ENCODE measurements at regions of chr19 and their contacts with region 1.

Region 1: DNA sequence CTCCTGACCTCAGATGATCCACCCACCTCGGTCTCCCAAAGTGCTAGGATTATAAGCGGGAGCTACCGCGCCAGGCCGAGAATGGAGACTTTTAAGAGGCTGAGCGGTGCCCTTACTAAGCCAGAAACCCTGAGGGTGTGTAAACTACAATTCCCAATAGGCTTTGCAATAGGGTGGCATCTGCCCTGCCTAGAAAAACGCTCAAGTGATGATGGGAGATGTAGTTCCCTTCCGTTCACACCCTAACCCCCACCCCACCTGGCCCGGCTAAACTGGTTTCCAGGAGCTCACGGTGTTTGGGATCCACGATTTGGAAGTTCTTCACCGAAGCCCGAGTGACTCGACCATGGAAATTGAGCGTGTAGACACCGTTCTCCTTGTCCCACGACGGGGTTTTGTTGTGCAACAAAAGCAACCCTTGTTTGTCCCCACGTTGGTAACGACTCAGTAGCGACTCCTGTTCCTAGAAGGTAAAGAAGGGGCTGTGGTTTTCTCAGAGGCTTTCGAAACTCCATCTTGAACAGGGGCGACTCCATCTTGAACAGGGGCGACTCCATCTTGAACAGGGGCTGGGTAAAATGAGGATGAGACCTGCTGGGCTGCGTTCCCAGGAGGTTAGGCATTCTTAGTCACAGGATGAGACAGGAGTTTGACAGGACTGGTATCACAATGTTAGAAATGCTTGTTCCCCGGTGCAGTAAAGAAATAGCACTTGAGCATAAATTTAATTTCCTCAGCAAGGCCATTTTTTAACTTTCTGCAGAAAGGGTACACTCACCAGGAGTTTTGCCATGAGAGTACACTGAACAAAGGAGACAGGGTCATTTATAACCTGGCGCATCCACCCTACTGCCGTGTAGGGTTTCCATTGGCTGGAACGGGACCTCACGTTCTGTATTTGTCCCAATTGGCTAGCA is 9.8 kb downstream of the PPP1R15A start:
- DNase-seq: peak; percentile 33 to 83
- H3K4me3 ChIP-seq: no peak overlapping the region
- H3K27ac ChIP-seq: 0 out of 2 replicates have a peak overlapping the region, but pooled peaks have one; percentile 5
- H3K4me1 ChIP-seq: peaks cover 0 to 6% (median 0%) of the 10 kb centered on the region in 4 experiments; a peak in 1 of 7 replicates
- H3K27me3 ChIP-seq: no peaks in the 10 kb centered on the region
- CTCF ChIP-seq: no peak
- EP300 ChIP-seq: no peak
- POLR2A ChIP-seq: no peak
- RAD21 ChIP-seq: no peak

Region 2: DNA sequence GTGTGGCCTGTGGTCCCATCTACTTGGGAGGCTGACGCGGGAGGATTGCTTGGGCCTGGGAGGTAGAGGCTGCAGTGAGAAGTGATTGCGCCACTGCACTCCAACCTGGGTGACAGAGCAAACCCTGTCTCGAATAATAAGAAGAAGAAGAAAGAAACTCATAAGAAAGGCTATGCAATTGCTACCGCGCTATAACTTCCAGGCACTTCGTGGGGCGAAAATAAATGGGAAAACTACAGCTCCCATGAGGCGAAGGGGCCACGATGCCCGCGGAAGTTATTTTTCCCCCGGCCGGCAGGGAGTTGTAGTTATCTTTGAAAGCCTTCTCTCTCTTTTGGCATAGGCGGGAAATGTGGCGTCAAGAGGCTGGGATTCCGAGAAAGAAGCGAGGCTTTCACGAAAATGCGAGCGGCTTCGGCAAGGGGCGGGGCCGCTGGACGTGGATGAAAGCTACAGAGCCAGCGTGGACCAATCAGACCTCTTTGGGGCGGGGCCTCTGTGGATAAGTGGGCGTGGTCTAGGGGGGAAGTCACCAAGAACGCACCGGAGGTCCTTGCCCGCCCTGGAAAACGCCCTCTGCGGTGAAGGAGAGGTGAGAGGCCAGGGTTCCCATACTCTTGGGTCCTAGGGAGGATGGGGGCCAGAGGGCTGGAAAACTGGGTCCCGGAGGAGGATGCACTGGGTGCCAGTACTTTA is 17.9 kb after region 1 on chr19 and contains the start of gene NUCB1:
- CTCF ChIA-PET with region 1: interaction called, 3 read pairs
- POLR2A ChIA-PET with region 1: interaction called, 75 read pairs
- DNase-seq: peak; percentile 95 to 99
- H3K4me3 ChIP-seq: peak within 1 kb of the TSS; percentile 58 to 90 (median 84)
- H3K27ac ChIP-seq: peak within 1 kb of the TSS; percentile 41; the same call in 1 of the 2 replicates
- H3K4me1 ChIP-seq: peaks cover 0 to 4% (median 0%) of the 10 kb centered on the region in 4 experiments; a peak in 4 of 7 replicates
- H3K27me3 ChIP-seq: no peaks in the 10 kb centered on the region
- CTCF ChIP-seq: peak in 2 of 3 experiments; percentile 8 to 44; a peak in 2 of 4 replicates
- EP300 ChIP-seq: no peak
- POLR2A ChIP-seq: 0 out of 3 replicates have a peak, but pooled peaks of 1 of the 2 experiments have one; percentile 41
- RAD21 ChIP-seq: no peak
- total RNA-seq, gene NUCB1: 106 and 111 TPM in 2 replicates

Measured in H1 (cell line).